Heart left ventricle (tissue), 16 donors: ENCODE measurements at regions of chr19 and their contacts with region 1.

Region 1: GRCh38 chr19:36060430-36060829 is 5.7 kb downstream of the WDR62 start:
- DNase-seq: peak; percentile 24 to 70 (median 54)
- ATAC-seq: peak; percentile 70 to 88 (median 86)
- H3K4me3 ChIP-seq: no peak overlapping the region
- H3K27ac ChIP-seq: no peak overlapping the region
- H3K4me1 ChIP-seq: peaks cover 0 to 6% (median 2%) of the 10 kb centered on the region in 12 donors
- H3K27me3 ChIP-seq: no peaks in the 10 kb centered on the region
- CTCF ChIP-seq: peak; percentile 33 to 66 (median 54)
- POLR2A ChIP-seq: no peak

Region 2: GRCh38 chr19:36097036-36097435 is 36.6 kb after region 1 on chr19:
- intact Hi-C with region 1: loop called in 3 of 10 experiments (anchors 5 kb)
- DNase-seq: no peak
- ATAC-seq: no peak
- H3K4me3 ChIP-seq: no peak overlapping the region
- H3K27ac ChIP-seq: peak overlapping the region in 7 of 12 donors; percentile 3 to 63 (median 33)
- H3K4me1 ChIP-seq: peaks cover 0 to 50% (median 22%) of the 10 kb centered on the region in 12 donors
- H3K27me3 ChIP-seq: no peaks in the 10 kb centered on the region
- CTCF ChIP-seq: no peak
- POLR2A ChIP-seq: no peak

Region 3: DNA sequence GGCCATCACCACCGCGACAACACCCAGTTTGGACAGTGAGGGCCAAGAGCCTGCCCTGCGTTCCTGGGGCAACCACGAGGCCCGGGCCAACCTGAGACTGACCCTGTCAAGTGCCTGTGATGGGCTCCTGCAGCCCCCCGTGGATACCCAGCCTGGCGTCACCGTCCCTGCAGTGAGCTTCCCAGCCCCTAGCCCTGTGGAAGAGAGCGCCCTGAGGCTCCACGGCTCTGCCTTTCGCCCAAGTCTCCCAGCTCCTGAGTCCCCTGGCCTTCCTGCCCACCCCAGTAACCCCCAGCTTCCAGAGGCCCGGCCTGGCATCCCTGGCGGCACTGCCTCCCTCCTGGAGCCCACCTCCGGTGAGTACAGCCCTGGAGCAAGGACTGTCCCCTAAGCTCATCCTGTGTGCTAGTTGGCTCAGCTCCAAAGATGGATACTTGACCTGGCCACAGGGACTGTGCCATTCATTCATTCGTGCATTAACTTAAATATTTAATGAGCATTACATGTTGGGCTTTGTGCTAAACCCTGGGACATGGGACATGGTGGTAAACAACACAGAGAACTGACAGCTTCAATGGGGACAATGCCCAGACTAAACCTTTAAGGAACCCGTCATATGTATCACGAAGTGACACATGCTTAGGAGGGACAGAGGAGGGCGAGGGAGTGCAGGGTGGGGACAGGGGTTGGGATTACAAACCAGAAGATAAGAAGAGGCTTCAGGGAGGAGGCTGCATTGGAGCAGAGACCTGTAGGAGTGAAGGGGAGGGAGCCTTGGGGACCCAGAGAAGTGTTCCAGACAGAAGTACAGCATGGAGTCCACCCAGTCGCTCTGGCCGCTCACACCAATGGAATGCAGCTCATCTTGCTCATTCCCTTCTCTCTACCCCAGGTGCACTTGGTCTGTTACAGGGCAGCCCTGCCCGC is 43.5 kb after region 1 on chr19:
- intact Hi-C with region 1: loop called in 4 of 10 experiments (anchors 5 kb)
- DNase-seq: no peak
- ATAC-seq: no peak
- H3K4me3 ChIP-seq: no peak overlapping the region
- H3K27ac ChIP-seq: no peak overlapping the region
- H3K4me1 ChIP-seq: peaks cover 0 to 34% (median 15%) of the 10 kb centered on the region in 12 donors
- H3K27me3 ChIP-seq: no peaks in the 10 kb centered on the region
- CTCF ChIP-seq: no peak
- POLR2A ChIP-seq: no peak

Region 4: GRCh38 chr19:36114763-36115452 is 54.5 kb after region 1 on chr19 and contains the start of gene POLR2I:
- intact Hi-C with region 1: loop called in 6 of 10 experiments (anchors 1 to 5 kb)
- DNase-seq: peak; percentile 99 to 100 (median 100)
- ATAC-seq: peak; percentile 95 to 99 (median 97)
- H3K4me3 ChIP-seq: peak within 1 kb of the TSS; percentile 60 to 98 (median 90)
- H3K27ac ChIP-seq: peak within 1 kb of the TSS; percentile 28 to 93 (median 88)
- H3K4me1 ChIP-seq: peaks cover 3 to 32% (median 19%) of the 10 kb centered on the region in 12 donors
- H3K27me3 ChIP-seq: no peaks in the 10 kb centered on the region
- CTCF ChIP-seq: no peak
- POLR2A ChIP-seq: peak in 1 of 2 donors; percentile 50
- total RNA-seq, gene POLR2I: 80.4 to 153 (median 107) TPM